ENCODE measurements at regions of chr11 and their contacts with region 1.

Region 1: DNA sequence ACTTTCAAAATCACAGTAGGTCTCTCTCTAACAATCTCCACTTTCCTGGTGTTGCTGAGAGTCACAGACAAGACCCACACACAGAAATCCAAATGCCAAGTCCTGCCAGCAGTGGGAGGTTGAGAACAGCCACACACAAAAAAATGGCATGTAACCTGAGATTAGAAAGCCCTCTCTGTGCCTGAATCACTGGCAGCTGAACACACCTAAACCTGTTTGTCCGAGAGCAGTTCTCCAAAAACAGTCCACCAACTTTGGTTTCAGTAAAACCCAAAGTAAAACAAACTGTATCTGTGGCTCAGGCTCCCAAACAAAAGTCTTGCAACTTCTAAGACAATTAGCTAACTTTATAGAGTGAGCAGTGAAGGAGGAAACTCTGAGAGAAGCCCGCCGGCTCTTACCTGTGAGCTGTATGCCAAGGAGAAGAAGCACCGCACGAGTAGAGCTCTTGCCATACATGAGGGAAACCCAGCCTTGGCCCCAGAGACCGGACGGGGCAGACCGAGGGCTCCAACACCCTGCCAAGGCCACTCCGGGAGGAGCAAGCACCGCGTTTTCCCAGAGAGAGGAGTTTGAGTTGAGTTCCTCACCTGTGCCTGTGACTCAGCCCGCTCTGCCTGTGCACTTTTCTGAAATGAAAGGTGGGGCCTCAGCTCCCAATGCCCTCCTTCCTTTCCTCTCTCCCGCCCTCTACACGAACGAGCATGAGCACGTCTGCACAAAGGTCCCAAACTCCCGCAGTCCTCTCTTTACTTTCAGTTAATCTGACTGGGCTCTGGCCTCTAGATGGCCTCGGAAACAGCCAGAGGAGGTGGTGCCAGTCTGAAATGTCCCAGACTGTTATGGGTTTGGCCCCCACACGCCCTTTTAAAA is at the start of gene MPZL2:
- DNase-seq: peak; percentile 90 to 93
- H3K4me3 ChIP-seq: peak within 1 kb of the TSS; percentile 83
- H3K4me3 Mint-ChIP-seq: peak within 1 kb of the TSS; percentile 91
- H3K27ac Mint-ChIP-seq: peak within 1 kb of the TSS; percentile 96
- H3K4me1 ChIP-seq: peaks cover 23% of the 10 kb centered on the region; the same call in 1 of the 2 replicates
- H3K4me1 Mint-ChIP-seq: peaks cover 15% of the 10 kb centered on the region
- H3K27me3 ChIP-seq: no peaks in the 10 kb centered on the region
- H3K27me3 Mint-ChIP-seq: no peaks in the 10 kb centered on the region
- CTCF ChIP-seq: peak; percentile 30 to 59
- total RNA-seq, gene MPZL2: 69.9 and 80.2 TPM in 2 replicates

Region 2: GRCh38 chr11:117621226-117621625 is 642.7 kb before region 1 on chr11:
- CTCF ChIA-PET with region 1: no interaction called
- POLR2A ChIA-PET with region 1: no interaction called
- intact Hi-C with region 1: no loop called
- DNase-seq: peak in 1 of 2 experiments; percentile 25
- H3K4me3 ChIP-seq: no peak overlapping the region
- H3K4me3 Mint-ChIP-seq: no peak overlapping the region
- H3K27ac Mint-ChIP-seq: no peak overlapping the region
- H3K4me1 ChIP-seq: no peaks in the 10 kb centered on the region
- H3K4me1 Mint-ChIP-seq: peaks cover 8% of the 10 kb centered on the region
- H3K27me3 ChIP-seq: 0 out of 2 replicates have a peak, but pooled peaks cover 2% of the 10 kb centered on the region
- H3K27me3 Mint-ChIP-seq: peaks cover 8% of the 10 kb centered on the region
- CTCF ChIP-seq: peak; percentile 47 to 57

Region 3: DNA sequence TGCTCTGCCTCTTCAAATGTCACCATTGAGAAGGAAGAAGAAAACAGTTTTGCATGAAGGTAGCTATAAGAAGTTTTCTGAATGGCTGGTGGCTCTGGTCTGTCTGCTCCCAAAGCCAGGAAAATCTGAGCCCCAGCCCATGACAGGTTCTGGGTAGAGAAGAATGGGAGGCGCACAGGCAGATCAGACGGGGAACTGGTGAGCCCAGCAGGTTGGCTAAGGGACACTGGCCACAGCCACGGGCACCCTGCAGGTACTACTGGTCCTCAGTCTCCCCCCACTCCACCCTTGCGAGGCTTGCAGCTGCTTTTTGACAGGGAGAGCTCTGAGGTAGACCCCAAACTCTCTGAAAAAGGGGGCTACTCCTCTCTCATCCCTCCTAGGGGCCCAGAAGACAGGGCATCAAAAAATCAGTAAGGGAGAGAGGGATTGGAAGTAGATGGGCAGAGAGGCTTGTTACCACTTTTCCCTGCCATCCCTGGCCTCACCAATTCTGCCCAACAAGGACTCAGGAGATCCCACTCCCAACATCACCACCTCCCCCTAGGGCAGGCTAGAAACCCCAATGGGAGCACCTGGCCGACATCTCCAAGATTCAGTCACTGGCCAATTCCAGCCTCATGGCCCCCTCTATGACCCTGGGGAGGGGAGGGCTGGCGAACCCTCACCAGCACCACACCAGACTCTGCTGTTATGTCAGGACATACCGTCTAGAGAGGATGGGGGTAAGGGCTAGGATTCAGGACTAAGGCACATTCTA is 128.7 kb before region 1 on chr11:
- CTCF ChIA-PET with region 1: no interaction called
- POLR2A ChIA-PET with region 1: interaction called, 12 read pairs
- intact Hi-C with region 1: no loop called
- DNase-seq: no peak
- H3K4me3 ChIP-seq: no peak overlapping the region
- H3K4me3 Mint-ChIP-seq: no peak overlapping the region
- H3K27ac Mint-ChIP-seq: no peak overlapping the region
- H3K4me1 ChIP-seq: no peaks in the 10 kb centered on the region
- H3K4me1 Mint-ChIP-seq: no peaks in the 10 kb centered on the region
- H3K27me3 ChIP-seq: no peaks in the 10 kb centered on the region; the same call in 1 of the 2 replicates
- H3K27me3 Mint-ChIP-seq: peaks cover 3% of the 10 kb centered on the region
- CTCF ChIP-seq: no peak

Region 4: GRCh38 chr11:118211006-118211405 is 52.9 kb before region 1 on chr11:
- CTCF ChIA-PET with region 1: interaction called, 7 read pairs
- POLR2A ChIA-PET with region 1: interaction called, 12 read pairs
- intact Hi-C with region 1: loop called (anchors 1 kb)
- DNase-seq: no peak
- H3K4me3 ChIP-seq: no peak overlapping the region
- H3K4me3 Mint-ChIP-seq: no peak overlapping the region
- H3K27ac Mint-ChIP-seq: peak overlapping the region; percentile 67
- H3K4me1 ChIP-seq: peaks cover 78% of the 10 kb centered on the region
- H3K4me1 Mint-ChIP-seq: peaks cover 53% of the 10 kb centered on the region
- H3K27me3 ChIP-seq: no peaks in the 10 kb centered on the region
- H3K27me3 Mint-ChIP-seq: no peaks in the 10 kb centered on the region
- CTCF ChIP-seq: no peak

Region 5: DNA sequence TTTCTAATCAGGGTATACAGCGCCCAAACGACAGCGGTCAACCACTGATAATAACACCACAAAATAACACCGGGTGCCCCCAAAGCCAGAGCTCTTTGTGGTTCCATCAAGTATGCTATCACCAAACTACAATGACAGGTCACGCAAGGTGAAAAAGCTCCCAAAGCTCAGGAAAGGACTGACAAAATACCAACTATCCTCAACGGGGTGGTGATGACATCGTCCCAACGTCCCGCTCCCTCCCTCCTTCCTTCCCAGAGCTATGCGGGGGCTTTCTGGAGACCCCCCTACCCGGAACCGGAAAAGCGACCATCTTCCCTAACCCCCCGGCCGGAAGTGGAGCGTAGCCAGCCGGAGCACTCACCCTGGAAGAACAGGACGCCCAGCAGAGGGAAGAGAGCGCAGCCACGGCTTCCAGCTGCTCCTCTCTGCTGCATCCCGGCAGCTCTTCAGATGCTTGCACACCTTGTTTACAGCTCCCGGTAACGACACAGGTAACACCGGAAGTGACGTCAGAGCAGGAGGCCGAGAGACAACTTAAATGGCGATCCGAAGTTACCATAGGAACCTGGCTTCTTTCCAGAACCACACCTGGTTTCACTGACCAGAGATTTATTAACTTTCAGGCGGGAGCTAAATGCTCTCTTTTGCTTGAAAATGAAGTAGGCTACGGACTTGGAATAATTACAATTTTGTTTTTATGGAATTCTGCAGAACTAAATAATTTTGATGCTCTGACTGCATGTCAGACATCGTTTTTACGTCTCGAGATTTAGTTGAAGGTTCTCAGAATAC is 11.9 kb before region 1 on chr11 and contains the start of gene MPZL3:
- CTCF ChIA-PET with region 1: interaction called, 9 read pairs
- POLR2A ChIA-PET with region 1: interaction called, 24 read pairs
- intact Hi-C with region 1: loop called (anchors 1 kb)
- DNase-seq: peak; percentile 97 to 99
- H3K4me3 ChIP-seq: peak within 1 kb of the TSS; percentile 65
- H3K4me3 Mint-ChIP-seq: peak within 1 kb of the TSS; percentile 85
- H3K27ac Mint-ChIP-seq: peak within 1 kb of the TSS; percentile 98
- H3K4me1 ChIP-seq: peaks cover 11% of the 10 kb centered on the region
- H3K4me1 Mint-ChIP-seq: peaks cover 24% of the 10 kb centered on the region
- H3K27me3 ChIP-seq: no peaks in the 10 kb centered on the region
- H3K27me3 Mint-ChIP-seq: no peaks in the 10 kb centered on the region
- CTCF ChIP-seq: peak in 1 of 2 experiments; percentile 20
- total RNA-seq, gene MPZL3: 29.6 and 31.8 TPM in 2 replicates

Region 6: DNA sequence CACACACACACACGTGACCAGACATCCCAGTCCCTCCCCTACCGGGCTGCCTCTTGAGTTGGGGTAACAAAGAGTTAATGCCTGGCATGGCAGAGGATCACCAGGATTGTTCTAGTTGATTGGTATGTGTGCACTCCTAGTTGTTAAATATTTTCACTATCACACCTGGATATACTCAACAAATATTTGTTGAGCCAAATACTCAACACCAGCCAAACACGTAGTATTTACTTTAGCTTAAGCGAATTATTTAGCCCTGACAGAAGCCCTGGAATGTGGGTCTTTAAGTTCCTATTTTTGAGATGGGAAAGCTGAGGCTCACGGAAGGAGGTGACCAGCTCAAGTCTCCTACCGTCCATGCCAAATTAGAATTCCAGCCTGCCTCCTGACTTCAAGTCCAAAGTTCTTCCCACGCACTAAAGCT is 51.1 kb after region 1 on chr11:
- CTCF ChIA-PET with region 1: interaction called, 6 read pairs
- POLR2A ChIA-PET with region 1: interaction called, 3 read pairs
- intact Hi-C with region 1: loop called (anchors 2 kb)
- DNase-seq: peak; percentile 87 to 93
- H3K4me3 ChIP-seq: peak overlapping the region; percentile 26
- H3K4me3 Mint-ChIP-seq: peak overlapping the region; percentile 68
- H3K27ac Mint-ChIP-seq: peak overlapping the region; percentile 93
- H3K4me1 ChIP-seq: peaks cover 80% of the 10 kb centered on the region
- H3K4me1 Mint-ChIP-seq: peaks cover 65% of the 10 kb centered on the region
- H3K27me3 ChIP-seq: no peaks in the 10 kb centered on the region
- H3K27me3 Mint-ChIP-seq: no peaks in the 10 kb centered on the region
- CTCF ChIP-seq: no peak